MCF 10A (cell line): ENCODE measurements at regions of chr1 and their contacts with region 1.

Region 1: DNA sequence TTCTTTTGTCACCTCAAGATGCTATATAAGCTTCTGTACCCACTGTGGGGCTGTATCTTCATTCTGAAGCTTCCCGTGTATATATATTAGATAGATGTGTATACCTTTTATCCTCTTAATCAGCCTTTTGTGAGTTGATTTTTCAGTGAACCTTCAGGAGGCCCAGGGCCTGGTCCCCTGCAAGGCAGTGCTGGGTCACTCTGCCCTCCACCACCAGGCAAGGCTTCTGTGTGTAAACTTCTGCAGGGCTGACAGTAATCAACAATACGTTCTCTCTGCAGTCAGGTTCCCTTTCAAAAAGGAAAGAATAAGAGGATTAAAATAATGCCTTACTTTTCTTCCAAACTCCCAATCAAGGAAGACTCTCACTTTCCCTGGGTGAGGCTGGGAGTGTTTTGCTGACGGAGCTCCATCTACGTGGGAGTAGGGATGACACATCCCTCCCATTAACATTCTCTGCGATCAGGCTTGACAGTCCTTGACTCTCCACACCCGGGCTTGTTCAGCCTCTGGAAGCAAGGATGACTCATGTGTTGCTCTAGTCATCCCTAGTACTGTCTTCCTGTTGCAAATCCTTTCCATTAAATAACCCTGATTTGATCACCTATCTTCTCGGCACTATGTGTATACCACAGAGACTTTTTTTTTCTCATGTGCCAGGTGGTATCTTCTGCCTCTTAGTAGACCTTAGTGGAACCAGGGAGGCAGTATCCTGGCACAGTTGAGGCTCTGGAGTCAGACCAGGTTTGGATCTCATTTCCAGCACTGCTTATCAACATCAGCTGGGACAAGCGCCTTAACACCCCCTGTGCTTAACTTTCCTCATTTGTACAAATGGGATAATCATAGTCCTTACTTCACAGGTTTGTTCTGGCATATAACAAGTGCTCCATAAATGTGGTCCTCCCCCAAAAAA is 70.3 kb upstream of the KCNK1 start:
- DNase-seq: peak; percentile 100
- H3K4me3 Mint-ChIP-seq: no peak overlapping the region
- H3K27ac Mint-ChIP-seq: peak overlapping the region; percentile 72
- H3K4me1 Mint-ChIP-seq: peaks cover 20% of the 10 kb centered on the region
- H3K27me3 Mint-ChIP-seq: no peaks in the 10 kb centered on the region
- CTCF ChIP-seq: no peak

Region 2: DNA sequence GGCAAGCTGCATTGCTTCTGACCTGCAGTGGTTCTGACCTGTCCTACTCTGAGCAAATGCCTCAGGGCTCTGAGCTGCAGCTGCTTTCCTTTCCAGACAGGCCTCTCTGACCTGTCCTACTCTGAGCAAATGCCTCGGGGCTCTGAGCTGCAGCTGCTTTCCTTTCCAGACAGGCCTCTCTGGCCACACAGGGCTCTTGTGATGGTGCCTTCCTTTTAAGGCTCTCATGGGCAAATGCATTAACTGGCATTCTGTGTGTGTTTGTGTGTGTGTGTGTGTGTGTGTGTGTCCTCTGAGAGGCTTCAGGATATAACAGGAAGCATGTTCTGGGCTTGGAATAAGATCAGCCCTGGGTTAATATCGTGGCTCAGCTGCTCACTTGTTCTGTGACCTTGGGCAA is 461.9 kb before region 1 on chr1:
- CTCF ChIA-PET with region 1: no interaction called
- POLR2A ChIA-PET with region 1: no interaction called
- intact Hi-C with region 1: no loop called
- DNase-seq: no peak
- H3K4me3 Mint-ChIP-seq: no peak overlapping the region
- H3K27ac Mint-ChIP-seq: no peak overlapping the region
- H3K4me1 Mint-ChIP-seq: peaks cover 11% of the 10 kb centered on the region
- H3K27me3 Mint-ChIP-seq: no peaks in the 10 kb centered on the region
- CTCF ChIP-seq: no peak

Region 3: DNA sequence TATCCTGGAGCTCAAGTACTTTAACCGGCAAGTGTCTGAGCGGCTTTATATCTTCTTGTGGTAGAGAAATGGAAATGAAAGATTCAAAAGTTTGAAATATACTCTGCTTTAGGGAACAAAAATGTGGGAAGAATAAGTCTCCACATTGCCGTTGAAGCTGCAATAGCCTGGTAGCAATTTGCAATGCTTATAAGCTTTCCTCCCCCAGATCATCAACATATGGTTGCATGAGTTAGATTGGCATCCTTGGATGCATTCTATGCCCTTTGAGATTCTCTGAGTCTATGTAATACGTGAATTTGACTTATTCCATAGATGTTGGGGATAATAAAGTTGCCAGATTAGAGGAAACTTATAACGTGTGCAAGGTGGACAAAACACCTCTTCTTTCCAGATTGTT is 15.8 kb before region 1 on chr1:
- CTCF ChIA-PET with region 1: interaction called, 3 read pairs
- POLR2A ChIA-PET with region 1: interaction called, 12 read pairs
- intact Hi-C with region 1: no loop called
- DNase-seq: no peak
- H3K4me3 Mint-ChIP-seq: no peak overlapping the region
- H3K27ac Mint-ChIP-seq: no peak overlapping the region
- H3K4me1 Mint-ChIP-seq: no peaks in the 10 kb centered on the region
- H3K27me3 Mint-ChIP-seq: no peaks in the 10 kb centered on the region
- CTCF ChIP-seq: no peak

Region 4: GRCh38 chr1:233554037-233554436 is 10.4 kb after region 1 on chr1:
- CTCF ChIA-PET with region 1: no interaction called
- POLR2A ChIA-PET with region 1: interaction called, 12 read pairs
- intact Hi-C with region 1: no loop called
- DNase-seq: no peak
- H3K4me3 Mint-ChIP-seq: no peak overlapping the region
- H3K27ac Mint-ChIP-seq: no peak overlapping the region
- H3K4me1 Mint-ChIP-seq: no peaks in the 10 kb centered on the region
- H3K27me3 Mint-ChIP-seq: peaks cover 15% of the 10 kb centered on the region
- CTCF ChIP-seq: no peak

Region 5: DNA sequence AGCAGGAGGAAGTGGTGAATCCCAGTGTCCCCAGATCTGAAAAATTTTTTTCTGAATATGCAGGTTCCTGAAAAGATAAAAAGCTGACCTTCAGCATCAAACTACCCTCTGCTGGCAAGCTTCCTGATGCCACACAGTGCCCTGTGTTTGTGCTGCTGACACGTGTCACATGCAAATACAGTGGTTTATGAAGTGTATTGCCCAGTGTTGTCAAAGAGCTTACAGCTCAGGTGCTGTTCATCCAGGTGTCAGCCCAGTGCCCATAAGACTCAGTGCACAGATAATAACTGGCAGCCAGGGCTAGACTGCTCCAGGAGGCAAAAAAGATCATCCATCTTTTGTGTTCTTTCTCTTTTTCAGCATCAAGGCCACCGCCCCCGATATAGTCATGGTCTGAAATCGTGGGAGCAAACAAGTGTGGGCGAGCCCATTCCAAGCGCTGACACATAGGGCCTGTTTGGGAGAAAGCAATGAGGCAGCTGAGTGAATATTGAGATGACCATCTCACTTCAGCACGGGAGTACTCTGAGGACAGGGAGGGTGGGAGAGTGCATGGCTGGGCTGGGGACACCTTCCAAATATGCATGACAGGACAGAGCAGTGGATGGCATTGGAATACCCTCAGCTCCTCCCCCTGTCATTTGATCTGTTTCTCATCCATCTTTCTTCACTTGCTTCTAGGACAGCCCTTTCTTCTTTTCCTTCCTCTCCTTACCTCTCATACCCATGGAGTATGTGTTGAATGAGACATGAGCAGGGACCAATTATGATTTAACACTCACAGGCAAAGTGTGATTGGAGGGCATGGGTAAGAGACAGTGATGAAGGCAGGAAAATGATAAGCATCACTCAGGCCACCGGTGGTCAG is 63.9 kb after region 1 on chr1:
- CTCF ChIA-PET with region 1: no interaction called
- POLR2A ChIA-PET with region 1: no interaction called
- intact Hi-C with region 1: no loop called
- DNase-seq: peak; percentile 51
- H3K4me3 Mint-ChIP-seq: no peak overlapping the region
- H3K27ac Mint-ChIP-seq: no peak overlapping the region
- H3K4me1 Mint-ChIP-seq: peaks cover 8% of the 10 kb centered on the region
- H3K27me3 Mint-ChIP-seq: peaks cover 12% of the 10 kb centered on the region
- CTCF ChIP-seq: no peak